ENCODE measurements at regions of chr1 and their contacts with region 1.

Region 1: DNA sequence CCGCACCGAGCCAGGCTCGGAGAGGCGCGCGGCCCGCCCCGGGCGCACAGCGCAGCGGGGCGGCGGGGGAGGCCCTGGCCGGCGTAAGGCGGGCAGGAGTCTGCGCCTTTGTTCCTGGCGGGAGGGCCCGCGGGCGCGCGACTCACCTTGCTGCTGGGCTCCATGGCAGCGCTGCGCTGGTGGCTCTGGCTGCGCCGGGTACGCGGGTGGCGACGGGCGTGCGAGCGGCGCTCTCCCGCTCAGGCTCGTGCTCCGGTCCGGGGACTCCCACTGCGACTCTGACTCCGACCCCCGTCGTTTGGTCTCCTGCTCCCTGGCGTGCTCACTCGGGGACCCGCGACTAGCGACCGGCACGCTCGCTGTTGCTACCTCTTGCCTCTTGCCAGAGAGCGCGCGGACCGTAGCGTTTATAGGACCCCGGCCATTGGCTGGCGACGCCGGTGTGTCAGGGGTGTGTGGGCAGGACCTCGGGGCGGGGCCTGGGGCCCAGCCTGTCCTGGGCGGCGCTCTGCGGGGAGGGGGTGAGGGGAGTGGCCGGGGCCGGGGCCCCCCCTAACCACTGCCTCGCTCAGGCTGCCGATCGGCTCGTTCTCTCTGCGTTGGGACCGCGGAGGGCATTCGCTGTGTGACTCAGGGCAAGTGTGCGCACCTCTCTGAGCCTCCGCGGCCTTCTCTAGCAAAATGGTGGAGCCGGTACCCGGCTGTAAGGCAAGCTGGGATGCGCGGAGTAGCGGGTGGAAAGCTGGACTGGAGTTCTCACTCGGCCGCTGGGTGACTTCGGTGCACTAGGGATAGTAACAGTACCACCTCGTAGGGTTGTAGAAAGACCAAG is at the start of gene SLC2A1:
- DNase-seq: peak; percentile 84 to 95 (median 92)
- ATAC-seq: peak; percentile 96
- H3K4me3 ChIP-seq: peak within 1 kb of the TSS; percentile 96
- H3K4me3 Mint-ChIP-seq: peak within 1 kb of the TSS; percentile 95 to 99 (median 98)
- H3K27ac ChIP-seq: peak within 1 kb of the TSS; percentile 88
- H3K27ac Mint-ChIP-seq: peak within 1 kb of the TSS; percentile 94 to 99 (median 97)
- H3K4me1 ChIP-seq: peaks cover 34 to 40% of the 10 kb centered on the region in 2 donors
- H3K4me1 Mint-ChIP-seq: peaks cover 44 to 65% (median 56%) of the 10 kb centered on the region in 7 donors
- H3K27me3 ChIP-seq: no peaks in the 10 kb centered on the region
- H3K27me3 Mint-ChIP-seq: peaks cover 0 to 18% (median 0%) of the 10 kb centered on the region in 5 donors
- total RNA-seq, gene SLC2A1: 43.6 to 123 (median 73.1) TPM

Region 2: GRCh38 chr1:42035830-42036604 is 922.7 kb before region 1 on chr1:
- CTCF ChIA-PET with region 1: no interaction called
- POLR2A ChIA-PET with region 1: no interaction called
- intact Hi-C with region 1: loop called in 1 of 2 experiments (anchors 10 kb)
- DNase-seq: peak; percentile 92 to 100 (median 96)
- ATAC-seq: peak; percentile 98
- H3K4me3 ChIP-seq: peak overlapping the region; percentile 72
- H3K4me3 Mint-ChIP-seq: peak overlapping the region in 9 of 10 donors; percentile 74 to 88 (median 84)
- H3K27ac ChIP-seq: peak overlapping the region; percentile 74
- H3K27ac Mint-ChIP-seq: peak overlapping the region in 5 of 9 donors; percentile 37 to 82 (median 65)
- H3K4me1 ChIP-seq: peaks cover 25 to 43% of the 10 kb centered on the region in 2 donors
- H3K4me1 Mint-ChIP-seq: peaks cover 23 to 45% (median 39%) of the 10 kb centered on the region in 7 donors
- H3K27me3 ChIP-seq: no peaks in the 10 kb centered on the region
- H3K27me3 Mint-ChIP-seq: peaks cover 0 to 20% (median 0%) of the 10 kb centered on the region in 5 donors

Region 3: GRCh38 chr1:42681741-42682483 is 276.8 kb before region 1 on chr1 and contains the start of gene YBX1:
- CTCF ChIA-PET with region 1: no interaction called
- POLR2A ChIA-PET with region 1: interaction called, 3 read pairs
- intact Hi-C with region 1: loop called in 1 of 2 experiments (anchors 1 kb)
- DNase-seq: peak; percentile 85 to 98 (median 97)
- ATAC-seq: peak; percentile 94
- H3K4me3 ChIP-seq: peak within 1 kb of the TSS; percentile 74
- H3K4me3 Mint-ChIP-seq: peak within 1 kb of the TSS; percentile 95 to 99 (median 98)
- H3K27ac ChIP-seq: peak within 1 kb of the TSS; percentile 82
- H3K27ac Mint-ChIP-seq: peak within 1 kb of the TSS; percentile 93 to 98 (median 97)
- H3K4me1 ChIP-seq: peaks cover 35 to 47% of the 10 kb centered on the region in 2 donors
- H3K4me1 Mint-ChIP-seq: peaks cover 42 to 66% (median 54%) of the 10 kb centered on the region in 7 donors
- H3K27me3 ChIP-seq: no peaks in the 10 kb centered on the region
- H3K27me3 Mint-ChIP-seq: no peaks in the 10 kb centered on the region
- total RNA-seq, gene YBX1: 277 to 471 (median 287) TPM

Region 4: DNA sequence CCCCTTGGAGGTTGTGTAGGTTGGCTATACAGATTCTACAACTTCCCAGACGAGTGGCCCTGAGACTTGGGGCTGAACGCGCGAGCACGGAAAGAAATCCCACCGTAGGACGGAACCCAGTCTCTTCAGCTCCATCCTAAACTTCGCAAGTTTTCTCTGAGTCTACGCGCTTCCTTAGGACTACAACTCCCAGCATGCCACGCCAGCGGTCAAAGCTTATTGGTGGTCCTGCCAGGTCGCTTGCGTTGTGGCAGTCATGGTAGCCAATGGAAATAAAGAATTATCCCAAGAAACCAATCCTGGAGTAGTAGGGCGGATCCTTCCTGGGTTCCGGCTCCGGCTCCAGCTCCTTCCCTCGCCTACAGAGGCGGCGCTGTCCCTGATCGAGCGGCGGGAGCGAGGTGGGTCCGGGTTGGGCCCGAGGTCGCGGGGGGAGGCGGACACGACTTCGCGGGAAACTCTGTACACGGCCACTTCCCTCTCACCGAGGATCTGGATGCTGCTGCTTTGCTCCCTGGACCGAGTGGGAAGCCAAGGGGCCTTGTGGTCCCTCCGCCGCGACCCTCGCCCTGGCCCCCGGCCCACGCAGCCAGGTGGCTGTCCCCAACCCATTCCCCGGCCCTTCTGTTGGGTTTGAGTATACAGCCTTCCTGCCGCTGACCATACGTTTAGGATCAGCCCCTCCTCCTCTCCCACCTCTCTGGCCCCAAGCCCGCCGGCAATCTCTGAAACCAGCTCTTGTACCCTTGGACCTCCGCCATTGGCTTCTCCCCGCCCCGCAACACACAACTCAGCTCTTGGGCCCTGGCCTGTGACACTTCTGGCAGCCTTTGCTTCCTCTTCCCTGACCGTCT is 112.2 kb before region 1 on chr1 and contains the start of gene ZNF691:
- CTCF ChIA-PET with region 1: no interaction called
- POLR2A ChIA-PET with region 1: no interaction called
- intact Hi-C with region 1: loop called in 1 of 2 experiments (anchors 1 kb)
- DNase-seq: peak; percentile 51 to 91 (median 84)
- ATAC-seq: peak; percentile 99
- H3K4me3 ChIP-seq: peak within 1 kb of the TSS; percentile 97
- H3K4me3 Mint-ChIP-seq: peak within 1 kb of the TSS; percentile 84 to 100 (median 96)
- H3K27ac ChIP-seq: peak within 1 kb of the TSS; percentile 72
- H3K27ac Mint-ChIP-seq: peak within 1 kb of the TSS; percentile 71 to 95 (median 85)
- H3K4me1 ChIP-seq: peaks cover 11 to 22% of the 10 kb centered on the region in 2 donors
- H3K4me1 Mint-ChIP-seq: peaks cover 19 to 38% (median 31%) of the 10 kb centered on the region in 7 donors
- H3K27me3 ChIP-seq: no peaks in the 10 kb centered on the region
- H3K27me3 Mint-ChIP-seq: no peaks in the 10 kb centered on the region
- total RNA-seq, gene ZNF691: 3.5 to 17.2 (median 12.8) TPM

Region 5: GRCh38 chr1:42936309-42937078 is 22.2 kb before region 1 on chr1:
- CTCF ChIA-PET with region 1: interaction called, 5 read pairs
- POLR2A ChIA-PET with region 1: interaction called, 92 read pairs
- intact Hi-C with region 1: loop called (anchors 1 kb)
- DNase-seq: peak in 1 of 9 donors; percentile 8
- ATAC-seq: peak; percentile 19
- H3K4me3 ChIP-seq: peak overlapping the region; percentile 16
- H3K4me3 Mint-ChIP-seq: peak overlapping the region in 7 of 10 donors; percentile 12 to 72 (median 40)
- H3K27ac ChIP-seq: peak overlapping the region; percentile 48
- H3K27ac Mint-ChIP-seq: peak overlapping the region; percentile 26 to 98 (median 92)
- H3K4me1 ChIP-seq: peaks cover 82 to 94% of the 10 kb centered on the region in 2 donors
- H3K4me1 Mint-ChIP-seq: peaks cover 77 to 99% (median 96%) of the 10 kb centered on the region in 7 donors
- H3K27me3 ChIP-seq: no peaks in the 10 kb centered on the region
- H3K27me3 Mint-ChIP-seq: no peaks in the 10 kb centered on the region

Region 6: DNA sequence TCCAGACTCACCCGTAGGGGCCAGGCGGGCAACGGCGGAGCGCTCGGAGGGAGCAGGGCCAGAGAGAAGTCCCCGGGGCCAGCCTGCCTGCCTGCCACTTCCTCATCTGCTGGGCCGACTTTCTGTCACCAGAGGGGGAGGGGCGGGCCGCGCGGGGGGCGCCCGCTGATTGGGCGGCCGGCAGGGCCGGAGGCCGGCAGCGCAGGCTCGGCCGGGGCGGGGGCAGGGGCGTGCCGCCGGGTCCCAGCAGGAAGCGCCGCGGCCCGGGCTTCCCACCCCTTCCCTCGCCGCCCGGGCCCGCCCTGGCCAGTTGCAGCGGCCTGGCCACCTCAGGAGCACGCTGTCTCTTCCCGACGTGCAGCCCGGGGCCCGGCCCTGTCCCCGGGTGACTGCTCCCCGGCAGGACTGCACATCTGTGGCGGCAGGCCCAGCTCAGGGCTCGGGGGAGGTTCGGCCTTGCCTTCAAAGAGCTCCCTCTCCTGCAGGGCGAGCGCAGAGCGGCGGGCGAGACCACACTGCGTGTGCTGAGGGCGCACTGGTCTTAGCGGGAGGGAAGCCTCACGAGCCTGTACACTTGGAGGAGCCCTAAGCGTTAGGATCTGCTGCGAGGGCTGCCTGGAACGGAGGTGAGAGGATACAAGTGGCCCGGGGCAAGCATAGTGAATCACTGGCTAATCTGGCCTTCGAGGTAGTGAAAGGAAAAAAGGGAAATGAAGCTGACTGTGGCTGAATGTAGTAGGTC is 409.4 kb after region 1 on chr1 and contains the start of gene ELOVL1:
- CTCF ChIA-PET with region 1: no interaction called
- POLR2A ChIA-PET with region 1: no interaction called
- intact Hi-C with region 1: no loop called
- DNase-seq: peak; percentile 40 to 94 (median 58)
- ATAC-seq: peak; percentile 91
- H3K4me3 ChIP-seq: peak within 1 kb of the TSS; percentile 89
- H3K4me3 Mint-ChIP-seq: peak within 1 kb of the TSS; percentile 86 to 97 (median 92)
- H3K27ac ChIP-seq: peak within 1 kb of the TSS; percentile 90
- H3K27ac Mint-ChIP-seq: peak within 1 kb of the TSS; percentile 88 to 95 (median 91)
- H3K4me1 ChIP-seq: peaks cover 13 to 22% of the 10 kb centered on the region in 2 donors
- H3K4me1 Mint-ChIP-seq: peaks cover 24 to 47% (median 42%) of the 10 kb centered on the region in 7 donors
- H3K27me3 ChIP-seq: no peaks in the 10 kb centered on the region
- H3K27me3 Mint-ChIP-seq: no peaks in the 10 kb centered on the region
- total RNA-seq, gene ELOVL1: 25.9 to 65.3 (median 32.3) TPM

Region 7: DNA sequence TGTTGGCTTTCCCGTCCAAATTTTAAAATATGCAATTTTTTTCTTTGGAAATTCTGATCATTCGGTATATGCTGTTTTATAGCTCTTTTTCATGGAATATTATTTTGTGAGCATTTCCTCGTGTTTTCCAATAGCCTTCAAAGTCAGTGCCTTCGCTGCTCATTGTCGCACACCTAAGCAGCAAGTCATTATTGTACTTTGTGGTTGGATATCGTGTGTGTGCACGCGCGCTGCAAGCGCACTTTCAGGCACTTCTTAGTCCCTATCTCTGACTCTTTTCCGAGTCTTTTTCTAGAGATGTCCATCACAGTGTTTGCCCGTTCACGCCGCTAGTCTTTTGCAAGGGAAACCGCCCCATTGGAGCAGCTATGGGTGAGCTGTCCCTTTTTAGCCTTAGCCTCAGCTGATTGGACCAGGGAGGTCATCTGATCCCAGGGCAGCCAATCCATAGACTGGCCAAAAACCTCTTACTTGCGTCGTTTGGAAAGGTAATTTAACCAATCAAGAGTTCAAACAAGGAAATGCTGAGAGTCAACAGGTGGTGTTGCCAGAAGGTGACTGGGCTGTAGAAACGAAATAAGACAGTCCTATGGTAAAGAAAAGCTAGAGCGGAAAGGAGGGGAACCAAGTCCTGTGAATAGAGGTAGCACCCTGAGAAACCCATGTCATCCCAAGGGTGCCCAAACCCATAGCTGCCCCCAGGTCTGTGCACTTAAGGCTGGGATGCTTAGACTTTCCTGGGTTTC is 495.7 kb after region 1 on chr1:
- CTCF ChIA-PET with region 1: no interaction called
- POLR2A ChIA-PET with region 1: no interaction called
- intact Hi-C with region 1: loop called in 1 of 2 experiments (anchors 5 kb)
- DNase-seq: peak in 8 of 9 donors; percentile 53 to 67 (median 63)
- ATAC-seq: peak; percentile 85
- H3K4me3 ChIP-seq: peak overlapping the region; percentile 56
- H3K4me3 Mint-ChIP-seq: peak overlapping the region; percentile 86 to 95 (median 89)
- H3K27ac ChIP-seq: peak overlapping the region; percentile 57
- H3K27ac Mint-ChIP-seq: peak overlapping the region; percentile 63 to 96 (median 85)
- H3K4me1 ChIP-seq: peaks cover 0 to 9% of the 10 kb centered on the region in 2 donors
- H3K4me1 Mint-ChIP-seq: peaks cover 9 to 22% (median 18%) of the 10 kb centered on the region in 7 donors
- H3K27me3 ChIP-seq: no peaks in the 10 kb centered on the region
- H3K27me3 Mint-ChIP-seq: peaks cover 5 to 35% (median 12%) of the 10 kb centered on the region in 5 donors